Gastrocnemius medialis (tissue), 4 donors: ENCODE measurements at regions of chr16 and their contacts with region 1.

Region 1: DNA sequence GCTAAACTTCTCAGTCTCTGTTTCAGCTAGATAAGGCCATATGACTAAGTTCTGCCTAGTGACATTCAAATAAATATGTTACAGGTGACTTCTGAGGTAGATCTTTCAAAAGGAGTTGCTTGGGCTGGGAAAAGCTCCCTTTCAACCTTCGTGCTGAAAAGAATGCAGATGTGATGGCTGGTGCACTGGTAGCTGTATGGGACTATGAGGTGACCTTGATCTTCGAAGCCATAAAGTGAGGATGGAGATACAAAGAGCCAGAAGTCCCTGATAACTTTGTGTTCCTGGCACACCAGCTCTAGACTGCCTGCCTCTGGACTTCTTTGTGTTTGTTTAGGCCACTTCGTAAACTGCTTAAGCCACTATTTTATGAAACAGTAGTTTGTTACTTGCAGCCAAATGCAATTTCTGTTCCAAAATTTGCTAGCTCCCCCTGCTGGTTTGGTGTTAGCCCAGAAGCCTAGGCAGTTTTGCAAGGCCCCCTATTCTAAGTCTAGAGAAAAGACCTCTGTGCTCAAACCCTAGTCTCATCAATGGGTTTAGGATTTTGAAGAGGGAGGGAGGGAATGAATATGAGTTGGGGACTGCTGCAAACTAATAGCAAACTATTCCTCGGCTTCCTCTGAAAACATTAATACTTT is 23.3 kb upstream of the ERCC4 start:
- DNase-seq: no peak
- ATAC-seq: no peak
- H3K4me3 ChIP-seq: no peak overlapping the region
- H3K27ac ChIP-seq: no peak overlapping the region
- H3K4me1 ChIP-seq: peaks cover 9 to 37% of the 10 kb centered on the region in 2 donors
- H3K27me3 ChIP-seq: no peaks in the 10 kb centered on the region
- CTCF ChIP-seq: no peak
- POLR2A ChIP-seq: no peak

Region 2: GRCh38 chr16:13793841-13794409 is 102.7 kb before region 1 on chr16:
- in situ Hi-C with region 1: loop called in 1 of 4 experiments (anchors 25 kb)
- intact Hi-C with region 1: no loop called
- DNase-seq: peak in 1 of 2 donors; percentile 12
- ATAC-seq: peak in 1 of 2 donors; percentile 61
- H3K4me3 ChIP-seq: no peak overlapping the region
- H3K27ac ChIP-seq: peak overlapping the region in 1 of 4 donors; percentile 28
- H3K4me1 ChIP-seq: peaks cover 19 to 20% of the 10 kb centered on the region in 2 donors
- H3K27me3 ChIP-seq: no peaks in the 10 kb centered on the region
- CTCF ChIP-seq: no peak
- POLR2A ChIP-seq: no peak